HEK293 (cell line): ENCODE measurements at regions of chr19 and their contacts with region 1.

Region 1: GRCh38 chr19:46392243-46392801 is 21.0 kb downstream of the CCDC8 start:
- H3K4me3 ChIP-seq: no peak overlapping the region
- H3K27ac ChIP-seq: no peak overlapping the region
- H3K4me1 ChIP-seq: no peaks in the 10 kb centered on the region
- CTCF ChIP-seq: no peak

Region 2: GRCh38 chr19:46288896-46289588 is 103.3 kb before region 1 on chr19:
- CTCF ChIA-PET with region 1: interaction called, 75 read pairs
- POLR2A ChIA-PET with region 1: no interaction called
- H3K4me3 ChIP-seq: no peak overlapping the region
- H3K27ac ChIP-seq: no peak overlapping the region
- H3K4me1 ChIP-seq: no peaks in the 10 kb centered on the region
- CTCF ChIP-seq: no peak

Region 3: GRCh38 chr19:46466536-46467196 is 74.3 kb after region 1 on chr19:
- CTCF ChIA-PET with region 1: interaction called, 12 read pairs
- POLR2A ChIA-PET with region 1: no interaction called
- H3K4me3 ChIP-seq: no peak overlapping the region
- H3K27ac ChIP-seq: no peak overlapping the region
- H3K4me1 ChIP-seq: no peaks in the 10 kb centered on the region; the same call in 1 of the 2 replicates
- CTCF ChIP-seq: no peak

Region 4: DNA sequence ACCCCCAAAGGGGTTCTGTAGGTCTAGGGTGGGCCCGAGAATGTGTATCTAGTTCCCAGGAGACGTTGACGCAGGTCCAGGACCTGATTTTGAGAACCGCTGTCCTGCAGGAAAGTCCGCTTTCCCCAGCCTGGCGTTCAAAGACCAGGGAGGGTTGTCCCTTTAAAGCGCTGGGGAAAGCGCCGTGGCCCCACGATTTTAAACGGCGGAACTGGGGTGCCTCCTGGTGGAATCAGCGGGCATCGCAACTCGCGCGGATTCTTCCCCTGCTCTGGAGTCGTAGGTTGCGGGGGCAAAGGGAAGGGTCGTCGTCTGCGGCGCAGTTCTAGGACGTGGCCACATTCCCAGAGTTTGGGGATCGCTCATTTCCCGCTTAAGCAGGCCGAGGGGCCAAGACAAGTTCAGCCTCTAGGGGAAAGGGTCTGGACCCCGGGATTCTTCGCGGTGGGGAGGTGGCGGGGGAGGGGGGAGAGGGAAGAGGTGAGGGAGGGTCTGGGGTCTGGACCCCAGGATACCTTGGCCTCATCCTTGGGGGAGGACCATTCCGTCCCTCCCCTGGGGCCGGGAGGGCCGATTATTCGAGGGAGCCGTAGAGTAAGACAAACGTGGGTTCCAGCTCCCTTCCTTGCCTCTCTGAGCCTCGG is 95.6 kb after region 1 on chr19:
- CTCF ChIA-PET with region 1: interaction called, 59 read pairs
- POLR2A ChIA-PET with region 1: no interaction called
- H3K4me3 ChIP-seq: peak overlapping the region; percentile 11
- H3K27ac ChIP-seq: no peak overlapping the region
- H3K4me1 ChIP-seq: peaks cover 5% of the 10 kb centered on the region; the same call in 1 of the 2 replicates
- CTCF ChIP-seq: peak; percentile 91

Region 5: GRCh38 chr19:46503848-46504453 is 111.6 kb after region 1 on chr19:
- CTCF ChIA-PET with region 1: interaction called, 21 read pairs
- POLR2A ChIA-PET with region 1: no interaction called
- H3K4me3 ChIP-seq: no peak overlapping the region
- H3K27ac ChIP-seq: no peak overlapping the region
- H3K4me1 ChIP-seq: no peaks in the 10 kb centered on the region
- CTCF ChIP-seq: no peak

Region 6: DNA sequence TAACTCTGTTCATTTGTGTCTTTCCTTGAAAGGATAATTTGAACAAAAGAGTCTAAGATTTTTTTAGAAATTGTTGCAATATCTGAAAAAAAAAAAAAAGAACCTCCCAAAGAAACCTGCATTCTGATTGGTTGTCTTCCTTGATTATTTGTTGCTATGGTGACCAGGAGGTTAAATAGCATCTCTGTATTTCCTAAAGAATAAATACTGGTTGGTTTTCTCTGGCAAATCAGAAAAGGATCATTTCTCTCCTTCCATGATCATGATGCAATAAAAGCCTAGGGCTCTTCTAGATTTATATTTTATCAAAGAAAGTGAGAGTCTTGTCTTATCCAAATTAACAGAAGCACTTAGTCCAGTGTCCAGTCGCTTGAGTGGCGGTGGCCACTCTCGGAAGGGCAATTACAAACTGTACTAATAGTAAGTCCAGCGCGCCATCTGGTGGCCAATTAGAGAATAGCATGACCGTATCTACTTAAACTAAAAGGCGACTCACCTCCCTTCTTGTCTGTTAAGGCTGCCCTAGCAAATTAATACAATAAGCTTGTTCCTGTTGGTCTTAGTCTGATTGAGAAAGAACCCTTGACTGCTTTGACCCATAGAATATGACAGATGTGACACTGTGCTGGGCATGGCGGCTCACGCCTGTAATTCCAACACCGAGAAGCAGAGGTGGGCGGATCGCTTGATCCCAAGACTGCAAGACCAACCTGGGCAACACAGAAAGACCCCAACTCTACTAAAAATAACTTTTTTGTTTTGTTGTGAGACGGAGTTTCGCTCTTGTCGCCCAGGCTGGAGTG is 150.3 kb after region 1 on chr19:
- CTCF ChIA-PET with region 1: interaction called, 17 read pairs
- POLR2A ChIA-PET with region 1: no interaction called
- H3K4me3 ChIP-seq: no peak overlapping the region
- H3K27ac ChIP-seq: no peak overlapping the region
- H3K4me1 ChIP-seq: no peaks in the 10 kb centered on the region; the same call in 1 of the 2 replicates
- CTCF ChIP-seq: peak; percentile 75